Endothelial cell of umbilical vein (primary cell): ENCODE measurements at regions of chr5 and their contacts with region 1.

Region 1: GRCh38 chr5:82107267-82107666 is 135.4 kb downstream of the ATG10 start:
- DNase-seq: peak; percentile 32
- H3K4me3 ChIP-seq: no peak overlapping the region
- H3K27ac ChIP-seq: no peak overlapping the region
- H3K4me1 ChIP-seq: no peaks in the 10 kb centered on the region
- H3K27me3 ChIP-seq: no peaks in the 10 kb centered on the region
- CTCF ChIP-seq: peak; percentile 9 to 31
- POLR2A ChIP-seq: no peak

Region 2: DNA sequence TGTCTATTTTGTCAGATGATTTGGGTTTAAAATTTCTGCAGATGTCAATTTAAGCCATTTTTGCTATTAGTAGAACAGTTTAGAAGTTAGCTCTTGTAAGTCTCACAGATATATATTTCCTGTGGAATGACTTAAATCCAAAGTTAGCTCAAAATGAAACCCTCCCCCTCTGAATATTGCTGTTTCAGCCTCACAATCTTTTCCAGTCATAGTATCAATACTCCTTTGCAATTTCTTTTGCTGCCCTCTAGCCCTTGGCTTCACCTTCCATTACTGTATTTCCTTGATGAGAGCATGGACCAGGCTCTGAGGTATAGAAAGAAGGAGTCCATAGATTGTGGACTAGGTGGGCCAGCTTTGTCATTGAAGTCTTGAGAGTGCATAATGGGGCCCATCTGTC is 11.0 kb before region 1 on chr5:
- CTCF ChIA-PET with region 1: interaction called, 14 read pairs
- POLR2A ChIA-PET with region 1: no interaction called
- dilution Hi-C with region 1: no loop called
- intact Hi-C with region 1: no loop called
- DNase-seq: no peak
- H3K4me3 ChIP-seq: no peak overlapping the region
- H3K27ac ChIP-seq: no peak overlapping the region
- H3K4me1 ChIP-seq: no peaks in the 10 kb centered on the region
- H3K27me3 ChIP-seq: no peaks in the 10 kb centered on the region
- CTCF ChIP-seq: no peak
- POLR2A ChIP-seq: no peak

Region 3: DNA sequence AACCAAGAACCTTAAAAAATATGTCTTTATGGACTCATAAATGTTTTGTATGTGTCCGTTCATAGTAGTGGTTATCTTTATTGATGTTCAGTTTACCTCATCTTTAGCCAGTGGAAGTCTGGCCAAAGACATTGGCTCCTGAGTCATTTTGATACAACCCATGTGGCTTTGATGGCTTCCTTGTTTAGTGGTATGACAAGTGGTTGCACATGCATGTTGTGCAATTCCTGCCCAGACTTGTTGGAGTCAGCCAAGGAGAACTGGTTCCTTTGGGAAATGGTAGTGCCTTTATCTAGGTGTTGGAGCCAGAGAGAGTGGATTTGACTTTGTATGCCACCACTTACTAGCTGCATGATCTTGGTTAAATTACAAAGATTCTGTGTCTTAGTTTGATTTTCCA is 76.6 kb after region 1 on chr5:
- CTCF ChIA-PET with region 1: no interaction called
- POLR2A ChIA-PET with region 1: no interaction called
- dilution Hi-C with region 1: no loop called
- intact Hi-C with region 1: no loop called
- DNase-seq: no peak
- H3K4me3 ChIP-seq: no peak overlapping the region
- H3K27ac ChIP-seq: no peak overlapping the region
- H3K4me1 ChIP-seq: no peaks in the 10 kb centered on the region
- H3K27me3 ChIP-seq: no peaks in the 10 kb centered on the region
- CTCF ChIP-seq: no peak
- POLR2A ChIP-seq: no peak

Region 4: GRCh38 chr5:82225525-82226172 is 118.4 kb after region 1 on chr5:
- CTCF ChIA-PET with region 1: interaction called, 12 read pairs
- POLR2A ChIA-PET with region 1: no interaction called
- dilution Hi-C with region 1: no loop called
- intact Hi-C with region 1: loop called (anchors 1 kb)
- DNase-seq: peak; percentile 78
- H3K4me3 ChIP-seq: no peak overlapping the region
- H3K27ac ChIP-seq: no peak overlapping the region
- H3K4me1 ChIP-seq: peaks cover 2% of the 10 kb centered on the region
- H3K27me3 ChIP-seq: no peaks in the 10 kb centered on the region
- CTCF ChIP-seq: peak; percentile 66 to 85
- POLR2A ChIP-seq: no peak